AG04449 (cell line): ENCODE measurements at regions of chr1 and their contacts with region 1.

Region 1: DNA sequence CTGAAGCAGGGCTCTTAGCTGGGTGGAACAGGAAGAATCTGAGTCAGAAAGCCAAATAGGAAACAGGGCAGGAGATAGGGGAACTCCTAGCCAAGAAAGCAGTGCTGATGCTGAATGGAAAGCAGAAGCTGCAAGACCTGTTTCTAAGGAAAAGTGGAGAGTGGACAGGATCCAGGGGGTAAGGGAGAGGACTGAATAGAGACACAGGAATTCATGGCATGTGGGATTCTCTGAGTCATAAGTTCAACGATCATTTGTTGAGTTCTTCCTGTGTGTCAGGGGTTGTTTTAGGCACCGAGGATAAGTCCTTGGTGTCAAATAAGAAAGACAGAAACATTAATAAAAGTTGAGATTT is 153.8 kb upstream of the FGGY start:
- DNase-seq: peak; percentile 85
- H3K4me3 ChIP-seq: no peak overlapping the region
- CTCF ChIP-seq: no peak

Region 2: GRCh38 chr1:59128784-59129227 is 14.3 kb before region 1 on chr1:
- CTCF ChIA-PET with region 1: interaction called, 3 read pairs
- POLR2A ChIA-PET with region 1: interaction called, 10 read pairs
- DNase-seq: peak; percentile 34
- H3K4me3 ChIP-seq: no peak overlapping the region
- CTCF ChIP-seq: no peak

Region 3: GRCh38 chr1:59186656-59187055 is 43.5 kb after region 1 on chr1:
- CTCF ChIA-PET with region 1: no interaction called
- POLR2A ChIA-PET with region 1: no interaction called
- DNase-seq: peak; percentile 44
- H3K4me3 ChIP-seq: no peak overlapping the region
- CTCF ChIP-seq: peak; percentile 3